Activated naive CD4-positive, alpha-beta T cell treated with anti-CD3 and anti-CD28 coated beads for 36 hours (primary cell): ENCODE measurements at regions of chr9 and their contacts with region 1.

Region 1: DNA sequence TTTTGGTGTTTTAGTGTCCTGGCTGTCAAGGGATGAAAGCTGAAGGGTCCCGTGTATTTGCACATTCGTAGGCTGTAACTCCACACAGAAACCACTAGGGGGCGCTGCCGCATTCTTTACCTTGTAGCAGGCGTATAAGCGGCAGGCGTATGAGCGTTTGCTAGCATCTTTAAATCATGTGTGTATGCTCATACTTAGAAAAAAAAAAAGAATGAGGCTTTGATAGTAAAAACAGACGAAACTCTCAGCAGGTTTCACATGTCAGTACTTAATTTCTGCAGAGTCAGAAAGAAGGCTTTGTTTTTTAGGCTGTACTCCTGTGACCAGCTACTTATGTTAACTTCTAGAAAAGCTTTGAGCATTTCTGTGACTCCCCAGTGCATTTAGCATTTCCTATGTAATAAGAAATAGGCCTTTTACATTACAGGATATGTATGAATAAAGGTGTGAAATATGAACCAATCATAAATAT is 218.8 kb upstream of the ADAMTSL1 start:
- DNase-seq: peak; percentile 86
- H3K4me3 Mint-ChIP-seq: no peak overlapping the region
- H3K27ac Mint-ChIP-seq: no peak overlapping the region
- H3K4me1 Mint-ChIP-seq: peaks cover 2% of the 10 kb centered on the region
- H3K27me3 Mint-ChIP-seq: peaks cover 3% of the 10 kb centered on the region

Region 2: GRCh38 chr9:18268381-18268780 is 13.2 kb after region 1 on chr9:
- CTCF ChIA-PET with region 1: interaction called, 11 read pairs
- intact Hi-C with region 1: no loop called
- DNase-seq: no peak
- H3K4me3 Mint-ChIP-seq: no peak overlapping the region
- H3K27ac Mint-ChIP-seq: no peak overlapping the region
- H3K4me1 Mint-ChIP-seq: no peaks in the 10 kb centered on the region
- H3K27me3 Mint-ChIP-seq: peaks cover 12% of the 10 kb centered on the region

Region 3: DNA sequence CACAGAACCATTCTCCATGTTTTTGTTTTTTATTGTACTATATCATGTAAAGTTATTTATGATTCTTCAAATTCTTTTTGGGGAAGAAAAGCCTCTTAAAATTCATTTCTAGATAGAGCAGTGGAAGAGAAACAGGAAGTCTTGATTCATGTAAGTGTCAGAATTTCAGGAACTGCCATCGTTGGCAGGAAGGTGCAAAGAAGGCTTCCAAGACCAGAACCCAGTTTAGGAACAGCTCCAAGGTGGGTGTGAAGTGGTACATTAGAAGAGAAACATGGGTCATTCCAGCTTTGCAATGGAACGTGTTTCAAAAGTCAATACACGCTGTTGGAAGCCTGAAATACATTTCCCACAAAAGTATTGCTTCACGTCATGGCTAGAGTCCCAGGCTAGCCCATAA is 763.0 kb after region 1 on chr9:
- CTCF ChIA-PET with region 1: no interaction called
- intact Hi-C with region 1: loop called (anchors 5 kb)
- DNase-seq: no peak
- H3K4me3 Mint-ChIP-seq: no peak overlapping the region
- H3K27ac Mint-ChIP-seq: no peak overlapping the region
- H3K4me1 Mint-ChIP-seq: no peaks in the 10 kb centered on the region
- H3K27me3 Mint-ChIP-seq: no peaks in the 10 kb centered on the region

Region 4: DNA sequence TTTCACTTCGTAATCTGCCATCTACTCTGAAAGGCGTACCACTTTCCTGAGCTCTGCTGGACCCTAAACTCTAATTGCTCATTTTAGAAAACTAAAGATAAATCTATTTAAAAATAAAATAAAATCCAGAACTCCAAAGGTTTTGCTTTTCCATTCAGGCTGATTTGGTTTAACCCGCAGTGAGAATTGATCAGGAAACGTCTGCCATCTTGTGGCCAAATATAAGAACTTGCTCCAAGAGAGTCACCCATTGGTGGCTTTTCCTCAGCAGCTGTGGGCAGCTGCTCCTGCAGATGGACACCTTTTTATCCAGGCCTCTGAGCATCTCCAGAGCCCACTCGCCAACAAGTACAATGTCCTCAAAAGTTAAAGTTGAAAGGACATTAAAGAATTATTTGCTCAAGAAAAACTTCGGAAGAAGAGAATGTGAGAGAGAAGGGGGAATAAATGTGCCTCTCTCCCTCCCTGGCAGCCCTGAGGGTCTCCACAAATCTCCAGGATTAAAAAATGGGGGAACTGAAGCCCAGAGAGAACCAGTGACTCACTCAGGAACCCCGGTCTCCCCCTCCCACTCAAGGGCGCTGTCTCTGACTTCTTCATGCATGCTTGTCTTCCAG is 773.7 kb after region 1 on chr9:
- CTCF ChIA-PET with region 1: interaction called, 43 read pairs
- intact Hi-C with region 1: loop called (anchors 1 kb)
- DNase-seq: peak; percentile 54
- H3K4me3 Mint-ChIP-seq: no peak overlapping the region
- H3K27ac Mint-ChIP-seq: no peak overlapping the region
- H3K4me1 Mint-ChIP-seq: peaks cover 7% of the 10 kb centered on the region
- H3K27me3 Mint-ChIP-seq: peaks cover 10% of the 10 kb centered on the region